ENCODE measurements at regions of chr2 and their contacts with region 1.

Region 1: GRCh38 chr2:20012299-20013125 is at the start of gene MATN3:
- DNase-seq: peak; percentile 37 to 58 (median 46)
- ATAC-seq: peak; percentile 84
- H3K4me3 ChIP-seq: peak within 1 kb of the TSS in 1 of 2 donors; percentile 21
- H3K27ac ChIP-seq: no peak within 1 kb of the TSS
- H3K4me1 ChIP-seq: peaks cover 12% of the 10 kb centered on the region
- H3K27me3 ChIP-seq: peaks cover 0 to 5% of the 10 kb centered on the region in 2 donors
- CTCF ChIP-seq: no peak
- POLR2A ChIP-seq: no peak
- total RNA-seq, gene MATN3: not detected

Region 2: GRCh38 chr2:20097879-20098714 is 85.6 kb after region 1 on chr2:
- intact Hi-C with region 1: loop called (anchors 5 kb)
- DNase-seq: peak; percentile 81 to 87 (median 84)
- ATAC-seq: peak; percentile 92
- H3K4me3 ChIP-seq: no peak overlapping the region
- H3K27ac ChIP-seq: no peak overlapping the region
- H3K4me1 ChIP-seq: peaks cover 8% of the 10 kb centered on the region
- H3K27me3 ChIP-seq: no peaks in the 10 kb centered on the region
- CTCF ChIP-seq: peak; percentile 62 to 95 (median 93)
- POLR2A ChIP-seq: no peak